HAP-1 (cell line): ENCODE measurements at regions of chr9 and their contacts with region 1.

Region 1: GRCh38 chr9:70602321-70603019 is 188.0 kb upstream of the KLF9 start:
- DNase-seq: peak; percentile 71 to 89
- H3K4me3 ChIP-seq: no peak overlapping the region
- H3K4me1 ChIP-seq: peaks cover 13% of the 10 kb centered on the region
- H3K27me3 ChIP-seq: no peaks in the 10 kb centered on the region

Region 2: DNA sequence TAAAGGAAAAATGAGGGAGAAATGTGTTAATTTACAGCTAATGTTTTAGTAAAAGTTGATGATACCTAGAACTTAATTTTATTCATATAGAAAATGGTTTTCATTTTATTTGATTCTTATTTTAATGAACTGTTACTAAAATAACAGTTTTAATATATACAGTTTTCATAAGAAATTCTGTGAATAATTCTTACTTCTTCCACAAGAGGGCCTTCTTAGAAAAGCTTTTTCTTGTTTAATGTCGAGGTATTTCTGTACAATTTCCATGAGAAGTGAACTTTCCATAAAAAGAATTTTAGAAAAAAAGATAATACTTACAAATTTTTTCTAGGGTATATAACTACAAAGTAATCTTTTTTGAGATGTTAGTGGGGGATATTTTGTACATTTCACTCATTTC is 261.9 kb before region 1 on chr9:
- in situ Hi-C with region 1: loop called (anchors 5 kb)
- DNase-seq: peak in 1 of 2 experiments; percentile 54
- H3K4me3 ChIP-seq: no peak overlapping the region
- H3K4me1 ChIP-seq: peaks cover 4% of the 10 kb centered on the region
- H3K27me3 ChIP-seq: no peaks in the 10 kb centered on the region